ENCODE measurements at regions of chr19 and their contacts with region 1.

Region 1: GRCh38 chr19:3700221-3701032 is at the start of gene PIP5K1C:
- DNase-seq: peak; percentile 95
- H3K4me3 ChIP-seq: peak within 1 kb of the TSS; percentile 69 to 99 (median 94)
- H3K27ac ChIP-seq: peak within 1 kb of the TSS; percentile 84 to 93 (median 87)
- H3K4me1 ChIP-seq: peaks cover 10 to 28% (median 22%) of the 10 kb centered on the region in 4 donors
- H3K27me3 ChIP-seq: no peaks in the 10 kb centered on the region
- CTCF ChIP-seq: peak; percentile 73 to 89 (median 79)
- EP300 ChIP-seq: no peak
- POLR2A ChIP-seq: no peak
- total RNA-seq, gene PIP5K1C: 25.4 to 91.1 (median 36.4) TPM

Region 2: DNA sequence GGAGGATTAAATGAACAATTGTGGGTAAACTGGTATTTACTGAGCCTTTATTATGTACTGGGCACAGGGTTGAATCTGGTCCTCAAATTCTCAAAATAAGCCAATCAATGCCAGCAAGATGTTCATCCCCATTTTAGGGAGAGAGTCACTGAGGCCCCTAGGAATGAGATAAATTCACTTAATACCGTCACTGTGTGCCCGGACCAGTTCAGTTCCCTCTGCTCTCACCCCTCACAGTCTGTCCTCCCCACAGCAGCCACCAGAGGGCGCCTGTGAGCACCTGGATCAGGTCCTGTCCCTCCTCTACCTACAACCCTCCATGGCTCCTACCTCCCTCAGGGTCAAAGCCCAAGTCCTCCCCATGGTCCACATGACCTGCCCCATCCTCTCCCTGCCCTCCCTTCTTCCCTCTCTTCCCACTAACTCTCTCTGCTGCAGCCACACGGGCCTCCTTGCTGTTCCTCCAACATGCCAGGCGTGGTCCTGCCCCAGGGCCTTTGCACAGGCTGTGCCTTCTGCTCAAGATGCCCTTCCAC is 376.0 kb before region 1 on chr19:
- in situ Hi-C with region 1: no loop called
- intact Hi-C with region 1: no loop called
- DNase-seq: peak; percentile 78
- H3K4me3 ChIP-seq: no peak overlapping the region
- H3K27ac ChIP-seq: no peak overlapping the region
- H3K4me1 ChIP-seq: peaks cover 0 to 3% (median 0%) of the 10 kb centered on the region in 4 donors
- H3K27me3 ChIP-seq: peaks cover 17% of the 10 kb centered on the region
- CTCF ChIP-seq: peak; percentile 63 to 82 (median 73)
- EP300 ChIP-seq: no peak
- POLR2A ChIP-seq: no peak

Region 3: DNA sequence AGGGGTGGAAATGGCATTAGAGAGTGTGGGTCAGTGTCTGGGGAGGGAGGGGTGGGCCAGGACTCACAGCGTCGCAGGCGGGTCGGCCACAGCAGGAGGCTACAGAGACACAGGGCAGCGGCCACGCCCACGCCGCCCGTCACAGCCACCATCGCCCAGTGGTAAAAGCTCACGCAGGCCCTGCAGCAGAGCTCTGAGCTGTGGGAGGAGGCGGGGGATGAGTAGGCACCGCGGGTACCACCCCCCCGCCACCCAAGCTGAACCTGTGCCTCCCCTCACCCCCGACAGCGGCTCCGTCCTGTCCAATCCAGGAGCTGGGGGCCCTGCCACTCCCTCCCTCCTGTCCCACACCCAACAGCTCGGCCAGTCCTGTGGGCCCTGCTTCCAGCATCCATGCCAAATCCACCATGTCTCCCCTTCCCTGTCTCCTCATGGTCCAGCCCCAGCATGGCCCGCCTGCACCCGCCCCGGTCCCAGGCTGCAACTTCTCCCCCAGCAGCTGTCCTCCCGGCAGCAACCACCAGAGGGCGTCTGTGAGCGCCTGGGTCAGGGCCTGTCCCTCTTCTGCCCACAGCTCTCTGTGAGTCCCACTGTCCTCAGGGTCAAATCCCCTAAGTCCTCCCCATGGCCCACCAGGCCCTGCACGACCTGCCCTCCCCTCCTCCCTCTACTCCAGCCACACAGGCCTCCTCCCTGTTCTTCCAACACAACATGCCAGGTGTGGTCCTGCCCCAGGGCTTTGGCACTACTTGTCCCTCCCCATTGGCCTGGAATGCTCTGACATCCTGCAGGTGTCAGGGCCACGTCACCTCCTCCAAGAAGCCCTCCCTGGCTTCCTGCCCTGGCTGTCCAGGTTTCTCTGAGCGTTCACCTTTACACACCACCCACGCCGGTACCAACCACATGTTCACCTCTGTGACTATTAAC is 155.4 kb before region 1 on chr19:
- in situ Hi-C with region 1: no loop called
- intact Hi-C with region 1: loop called (anchors 10 kb)
- DNase-seq: peak; percentile 80
- H3K4me3 ChIP-seq: no peak overlapping the region
- H3K27ac ChIP-seq: no peak overlapping the region
- H3K4me1 ChIP-seq: no peaks in the 10 kb centered on the region
- H3K27me3 ChIP-seq: no peaks in the 10 kb centered on the region
- CTCF ChIP-seq: peak; percentile 94 to 97 (median 94)
- EP300 ChIP-seq: no peak
- POLR2A ChIP-seq: no peak

Region 4: DNA sequence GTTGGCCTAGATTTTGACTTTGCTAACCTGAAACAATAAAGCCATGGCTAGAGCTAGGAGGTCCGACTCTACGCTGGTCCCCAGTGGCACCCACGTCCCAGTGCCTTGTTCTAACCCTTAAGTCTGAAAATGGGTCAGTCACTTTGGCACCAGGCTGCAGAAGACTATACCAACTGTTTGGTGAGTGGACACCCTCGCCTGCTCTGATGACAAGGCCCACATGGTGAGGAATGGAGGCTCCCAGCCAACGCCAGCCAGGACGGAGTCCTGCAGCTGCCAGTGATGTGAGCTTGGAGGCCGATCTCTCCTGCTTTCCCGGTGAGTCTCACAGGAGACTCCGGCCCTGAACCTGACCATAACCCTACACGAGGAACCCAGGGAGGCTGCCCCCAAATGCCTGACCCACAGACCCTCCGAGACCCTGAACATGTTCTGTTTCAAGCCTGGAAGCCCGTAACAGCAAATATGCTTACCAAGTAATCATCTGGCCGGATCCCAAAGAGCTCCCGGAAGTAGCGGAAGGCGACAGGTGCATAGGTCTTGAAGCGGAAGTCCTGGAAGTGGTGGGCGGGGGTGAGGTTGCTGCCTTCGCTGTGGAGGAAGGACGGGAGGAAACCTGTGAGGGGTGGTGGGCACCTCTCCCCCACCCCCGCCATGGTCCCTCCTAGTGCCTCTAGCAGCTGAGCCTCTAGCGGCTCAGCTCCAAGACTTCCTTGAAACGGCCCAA is 39.8 kb before region 1 on chr19:
- in situ Hi-C with region 1: loop called in 1 of 4 experiments (anchors 5 kb)
- intact Hi-C with region 1: no loop called
- DNase-seq: no peak
- H3K4me3 ChIP-seq: no peak overlapping the region
- H3K27ac ChIP-seq: no peak overlapping the region
- H3K4me1 ChIP-seq: peaks cover 0 to 2% (median 0%) of the 10 kb centered on the region in 4 donors
- H3K27me3 ChIP-seq: no peaks in the 10 kb centered on the region
- CTCF ChIP-seq: no peak
- EP300 ChIP-seq: no peak
- POLR2A ChIP-seq: no peak

Region 5: GRCh38 chr19:3668319-3669081 is 31.9 kb before region 1 on chr19:
- in situ Hi-C with region 1: loop called in 1 of 4 experiments (anchors 5 kb)
- intact Hi-C with region 1: loop called (anchors 1 kb)
- DNase-seq: no peak
- H3K4me3 ChIP-seq: no peak overlapping the region
- H3K27ac ChIP-seq: peak overlapping the region; percentile 92 to 96 (median 94)
- H3K4me1 ChIP-seq: peaks cover 28 to 56% (median 40%) of the 10 kb centered on the region in 4 donors
- H3K27me3 ChIP-seq: no peaks in the 10 kb centered on the region
- CTCF ChIP-seq: no peak
- EP300 ChIP-seq: no peak
- POLR2A ChIP-seq: no peak